H1 (cell line): ENCODE measurements at regions of chr5 and their contacts with region 1.

Region 1: GRCh38 chr5:108216890-108217289 is 165.0 kb downstream of the FBXL17 start:
- DNase-seq: no peak
- H3K4me3 ChIP-seq: no peak overlapping the region
- H3K27ac ChIP-seq: no peak overlapping the region
- H3K4me1 ChIP-seq: peaks cover 0 to 6% (median 2%) of the 10 kb centered on the region in 4 experiments; a peak in 3 of 7 replicates
- H3K27me3 ChIP-seq: no peaks in the 10 kb centered on the region
- CTCF ChIP-seq: no peak
- EP300 ChIP-seq: no peak
- POLR2A ChIP-seq: no peak
- RAD21 ChIP-seq: no peak

Region 2: GRCh38 chr5:108201721-108202120 is 15.2 kb before region 1 on chr5:
- CTCF ChIA-PET with region 1: interaction called, 10 read pairs
- POLR2A ChIA-PET with region 1: interaction called, 3 read pairs
- DNase-seq: no peak
- H3K4me3 ChIP-seq: no peak overlapping the region
- H3K27ac ChIP-seq: no peak overlapping the region
- H3K4me1 ChIP-seq: peaks cover 0 to 2% (median 0%) of the 10 kb centered on the region in 4 experiments; a peak in 1 of 7 replicates
- H3K27me3 ChIP-seq: no peaks in the 10 kb centered on the region
- CTCF ChIP-seq: no peak
- EP300 ChIP-seq: no peak
- POLR2A ChIP-seq: no peak
- RAD21 ChIP-seq: 0 out of 4 replicates have a peak, but pooled peaks of 1 of the 2 experiments have one; percentile 6